Ovary (tissue), 10 donors: ENCODE measurements at regions of chr1 and their contacts with region 1.

Region 1: DNA sequence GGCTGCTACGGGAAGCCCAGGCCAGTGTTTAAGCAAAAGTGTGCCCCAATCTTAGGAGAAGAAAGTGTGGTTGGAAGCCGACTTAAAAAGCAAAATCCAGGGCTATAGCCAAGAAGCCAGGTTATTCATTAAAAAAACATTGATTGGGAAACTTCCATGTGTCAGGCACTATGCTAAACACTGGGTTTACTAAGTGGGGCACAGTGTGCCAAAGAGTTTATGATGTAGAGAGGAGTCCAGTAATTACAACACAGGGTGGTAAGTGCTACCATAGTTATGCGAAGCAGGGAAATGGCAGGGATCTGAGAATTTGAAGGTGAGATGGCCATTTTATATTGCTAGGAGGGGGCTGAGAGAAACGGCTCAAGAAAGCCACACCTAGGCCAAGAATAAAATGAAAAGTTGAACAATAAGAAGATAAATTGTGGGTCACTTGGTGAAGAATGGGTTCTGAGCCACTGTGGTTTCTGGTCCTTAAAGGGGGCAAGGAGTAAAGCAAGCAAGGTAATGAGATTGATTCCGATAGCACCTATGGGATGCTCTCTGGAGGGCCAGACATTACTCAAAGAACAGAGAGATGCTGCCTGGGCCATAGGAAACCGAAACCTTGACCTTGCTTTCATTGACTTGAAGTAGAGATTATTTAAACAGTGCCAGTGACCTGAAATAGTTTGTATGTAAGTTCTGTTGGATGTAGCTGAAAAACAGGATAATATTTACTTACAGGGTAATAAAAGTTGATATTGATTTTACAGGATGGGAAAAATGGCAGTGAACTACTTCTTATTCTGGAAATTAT is 177.8 kb downstream of the GIPC2 start:
- DNase-seq: no peak
- H3K4me3 ChIP-seq: no peak overlapping the region
- H3K27ac ChIP-seq: no peak overlapping the region
- H3K4me1 ChIP-seq: peaks cover 5% of the 10 kb centered on the region
- H3K27me3 ChIP-seq: no peaks in the 10 kb centered on the region
- CTCF ChIP-seq: no peak
- EP300 ChIP-seq: no peak
- POLR2A ChIP-seq: no peak

Region 2: DNA sequence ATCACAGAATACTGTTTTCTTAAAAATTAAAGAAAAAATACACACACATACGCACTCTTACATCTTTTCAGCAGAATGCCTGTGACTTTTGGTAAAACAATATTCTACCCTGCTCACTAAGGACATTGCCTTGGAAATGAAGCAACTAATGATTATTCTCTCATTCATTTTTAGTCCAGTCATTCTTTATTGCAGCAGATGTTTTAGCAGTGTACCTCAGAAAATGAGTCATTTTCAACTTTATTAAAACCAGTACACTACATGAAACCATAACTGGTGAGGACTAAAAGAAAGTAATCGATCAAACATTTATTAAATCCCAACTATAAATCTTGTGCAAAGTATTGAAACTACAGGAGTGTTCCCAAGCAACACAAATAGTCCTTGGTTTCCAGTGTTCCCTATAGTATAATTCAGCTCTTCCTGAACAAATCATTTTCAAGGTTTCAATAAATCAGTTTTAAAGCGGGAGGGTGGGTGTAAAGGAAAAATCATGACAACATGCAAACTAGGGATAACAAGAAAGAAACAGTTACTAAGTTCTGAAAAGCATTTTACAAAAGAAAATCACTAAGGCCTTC is 668.7 kb after region 1 on chr1:
- intact Hi-C with region 1: loop called in 1 of 4 experiments (anchors 5 kb)
- DNase-seq: no peak
- H3K4me3 ChIP-seq: no peak overlapping the region
- H3K27ac ChIP-seq: no peak overlapping the region
- H3K4me1 ChIP-seq: no peaks in the 10 kb centered on the region
- H3K27me3 ChIP-seq: no peaks in the 10 kb centered on the region
- CTCF ChIP-seq: no peak
- EP300 ChIP-seq: no peak
- POLR2A ChIP-seq: no peak